ENCODE measurements at regions of chr5 and their contacts with region 1.

Region 1: DNA sequence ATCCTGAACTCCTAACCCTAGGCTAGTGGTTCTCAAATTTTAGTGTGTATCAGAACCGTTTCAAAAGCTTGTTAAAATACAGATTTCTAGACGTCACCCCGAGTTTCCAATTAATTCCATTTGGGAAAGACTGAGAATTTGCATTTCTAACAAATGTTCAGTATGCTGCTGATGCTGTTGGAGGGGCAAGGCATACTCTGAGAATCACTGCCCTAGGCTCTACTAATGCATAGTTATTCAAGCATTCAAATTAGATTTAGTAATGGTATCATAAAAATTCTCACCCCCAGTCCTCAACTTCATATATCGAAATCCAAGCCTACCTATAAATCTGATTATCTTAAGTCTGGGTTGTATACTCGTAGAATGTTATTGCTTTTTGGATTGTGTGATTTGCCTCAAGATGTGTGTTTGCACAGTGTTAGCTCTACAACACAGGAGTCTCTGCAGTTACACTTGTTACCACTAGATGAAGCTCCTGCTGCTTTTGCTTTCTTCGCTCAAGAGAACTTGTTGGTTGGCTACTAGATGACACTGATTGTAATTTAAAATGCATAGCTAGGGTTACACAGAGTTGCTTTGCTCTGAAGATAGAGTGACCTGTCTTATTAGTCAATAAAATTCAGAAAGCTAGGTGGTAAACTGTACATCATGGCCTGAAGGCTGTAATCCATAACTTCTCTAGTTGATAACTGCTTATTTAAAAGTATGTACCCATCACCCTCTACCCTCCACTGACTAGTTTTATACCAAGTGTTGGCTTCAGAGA is 7.5 kb upstream of the ERAP2 start:
- DNase-seq: no peak
- ATAC-seq: peak; percentile 82
- H3K4me3 Mint-ChIP-seq: peak overlapping the region; percentile 54
- H3K27ac Mint-ChIP-seq: peak overlapping the region; percentile 78
- H3K4me1 Mint-ChIP-seq: peaks cover 47% of the 10 kb centered on the region
- H3K27me3 Mint-ChIP-seq: no peaks in the 10 kb centered on the region
- CTCF ChIP-seq: peak; percentile 43

Region 2: GRCh38 chr5:96752341-96753016 is 116.3 kb before region 1 on chr5:
- CTCF ChIA-PET with region 1: interaction called, 10 read pairs
- POLR2A ChIA-PET with region 1: no interaction called
- intact Hi-C with region 1: loop called (anchors 1 kb)
- DNase-seq: no peak
- ATAC-seq: no peak
- H3K4me3 Mint-ChIP-seq: no peak overlapping the region
- H3K27ac Mint-ChIP-seq: no peak overlapping the region
- H3K4me1 Mint-ChIP-seq: no peaks in the 10 kb centered on the region
- H3K27me3 Mint-ChIP-seq: no peaks in the 10 kb centered on the region
- CTCF ChIP-seq: peak; percentile 76

Region 3: GRCh38 chr5:96904054-96904931 is 35.5 kb after region 1 on chr5:
- CTCF ChIA-PET with region 1: interaction called, 41 read pairs
- POLR2A ChIA-PET with region 1: interaction called, 3 read pairs
- intact Hi-C with region 1: loop called (anchors 1 kb)
- DNase-seq: no peak
- ATAC-seq: no peak
- H3K4me3 Mint-ChIP-seq: no peak overlapping the region
- H3K27ac Mint-ChIP-seq: peak overlapping the region; percentile 37
- H3K4me1 Mint-ChIP-seq: peaks cover 15% of the 10 kb centered on the region
- H3K27me3 Mint-ChIP-seq: no peaks in the 10 kb centered on the region
- CTCF ChIP-seq: no peak

Region 4: DNA sequence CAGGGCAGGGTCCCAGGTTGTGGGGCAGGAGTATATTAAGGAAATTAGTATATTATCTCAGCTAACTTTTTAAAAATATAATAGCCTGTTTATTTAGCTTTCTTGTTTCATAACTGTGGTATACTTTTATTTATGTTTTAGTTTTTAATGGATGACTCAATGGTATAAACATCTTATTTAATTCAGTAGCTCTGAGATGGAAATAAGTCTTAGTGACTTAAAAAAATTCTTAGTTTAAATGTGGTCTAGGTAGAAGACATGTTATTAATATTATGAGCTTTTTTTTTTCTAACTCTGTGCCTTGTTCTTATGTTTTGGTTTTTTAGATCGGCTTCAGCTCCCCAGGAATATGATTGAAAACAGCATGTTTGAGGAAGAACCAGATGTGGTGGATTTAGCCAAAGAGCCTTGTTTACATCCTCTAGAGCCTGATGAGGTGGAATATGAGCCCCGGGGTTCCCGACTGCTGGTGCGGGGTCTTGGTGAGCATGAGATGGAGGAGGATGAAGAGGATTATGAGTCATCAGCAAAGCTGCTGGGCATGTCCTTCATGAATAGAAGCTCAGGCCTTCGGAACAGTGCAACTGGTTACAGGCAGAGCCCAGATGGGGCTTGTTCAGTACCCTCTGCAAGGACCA is 110.1 kb after region 1 on chr5:
- CTCF ChIA-PET with region 1: interaction called, 6 read pairs
- POLR2A ChIA-PET with region 1: no interaction called
- intact Hi-C with region 1: loop called (anchors 1 kb)
- DNase-seq: no peak
- ATAC-seq: no peak
- H3K4me3 Mint-ChIP-seq: no peak overlapping the region
- H3K27ac Mint-ChIP-seq: peak overlapping the region; percentile 43
- H3K4me1 Mint-ChIP-seq: peaks cover 31% of the 10 kb centered on the region
- H3K27me3 Mint-ChIP-seq: no peaks in the 10 kb centered on the region
- CTCF ChIP-seq: no peak

Region 5: GRCh38 chr5:97019435-97020117 is 150.8 kb after region 1 on chr5:
- CTCF ChIA-PET with region 1: interaction called, 10 read pairs
- POLR2A ChIA-PET with region 1: no interaction called
- intact Hi-C with region 1: no loop called
- DNase-seq: no peak
- ATAC-seq: no peak
- H3K4me3 Mint-ChIP-seq: no peak overlapping the region
- H3K27ac Mint-ChIP-seq: no peak overlapping the region
- H3K4me1 Mint-ChIP-seq: peaks cover 7% of the 10 kb centered on the region
- H3K27me3 Mint-ChIP-seq: no peaks in the 10 kb centered on the region
- CTCF ChIP-seq: no peak

Region 6: GRCh38 chr5:97183100-97183929 is 314.5 kb after region 1 on chr5 and contains the start of gene RIOK2:
- CTCF ChIA-PET with region 1: interaction called, 3 read pairs
- POLR2A ChIA-PET with region 1: no interaction called
- intact Hi-C with region 1: loop called (anchors 1 kb)
- DNase-seq: peak; percentile 78
- ATAC-seq: peak; percentile 89
- H3K4me3 Mint-ChIP-seq: peak within 1 kb of the TSS; percentile 96
- H3K27ac Mint-ChIP-seq: peak within 1 kb of the TSS; percentile 99
- H3K4me1 Mint-ChIP-seq: peaks cover 34% of the 10 kb centered on the region
- H3K27me3 Mint-ChIP-seq: no peaks in the 10 kb centered on the region
- CTCF ChIP-seq: no peak
- total RNA-seq, gene RIOK2: 38.3 and 41.4 TPM in 2 replicates